Activated CD4-positive, alpha-beta T cell treated with anti-CD3 and anti-CD28 coated beads, Interleukin-2, amount 10 ng/mL, durations not matched to agents 7 days and 5 days (primary cell): ENCODE measurements at regions of chr3 and their contacts with region 1.

Region 1: DNA sequence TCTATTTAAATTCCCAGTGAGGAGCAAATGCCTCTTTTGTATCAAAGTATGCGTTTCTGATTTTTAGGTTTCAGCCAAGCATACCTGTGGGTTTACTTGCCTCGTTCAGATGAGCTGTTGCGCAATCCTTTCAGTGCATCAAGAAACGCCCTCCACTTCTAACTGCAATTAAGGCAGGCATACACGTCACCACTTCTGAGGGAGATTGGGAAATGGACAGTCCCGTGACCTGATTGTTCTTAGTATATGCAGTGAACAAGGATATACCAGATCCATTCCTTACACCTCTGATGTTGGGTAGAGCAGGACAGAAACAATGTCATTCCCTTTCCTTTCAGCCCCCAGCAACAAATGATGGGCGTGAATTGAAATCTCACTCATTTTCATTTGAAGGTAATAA is 219.0 kb downstream of the ITPR1 start:
- DNase-seq: no peak
- H3K4me3 Mint-ChIP-seq: no peak overlapping the region
- H3K27ac Mint-ChIP-seq: no peak overlapping the region
- H3K4me1 Mint-ChIP-seq: peaks cover 18% of the 10 kb centered on the region
- H3K27me3 Mint-ChIP-seq: no peaks in the 10 kb centered on the region

Region 2: GRCh38 chr3:4670352-4670751 is 41.8 kb before region 1 on chr3:
- CTCF ChIA-PET with region 1: no interaction called
- POLR2A ChIA-PET with region 1: no interaction called
- DNase-seq: no peak
- H3K4me3 Mint-ChIP-seq: no peak overlapping the region
- H3K27ac Mint-ChIP-seq: no peak overlapping the region
- H3K4me1 Mint-ChIP-seq: no peaks in the 10 kb centered on the region
- H3K27me3 Mint-ChIP-seq: no peaks in the 10 kb centered on the region

Region 3: GRCh38 chr3:4786431-4786830 is 74.3 kb after region 1 on chr3:
- CTCF ChIA-PET with region 1: no interaction called
- POLR2A ChIA-PET with region 1: no interaction called
- DNase-seq: no peak
- H3K4me3 Mint-ChIP-seq: no peak overlapping the region
- H3K27ac Mint-ChIP-seq: no peak overlapping the region
- H3K4me1 Mint-ChIP-seq: no peaks in the 10 kb centered on the region
- H3K27me3 Mint-ChIP-seq: no peaks in the 10 kb centered on the region

Region 4: DNA sequence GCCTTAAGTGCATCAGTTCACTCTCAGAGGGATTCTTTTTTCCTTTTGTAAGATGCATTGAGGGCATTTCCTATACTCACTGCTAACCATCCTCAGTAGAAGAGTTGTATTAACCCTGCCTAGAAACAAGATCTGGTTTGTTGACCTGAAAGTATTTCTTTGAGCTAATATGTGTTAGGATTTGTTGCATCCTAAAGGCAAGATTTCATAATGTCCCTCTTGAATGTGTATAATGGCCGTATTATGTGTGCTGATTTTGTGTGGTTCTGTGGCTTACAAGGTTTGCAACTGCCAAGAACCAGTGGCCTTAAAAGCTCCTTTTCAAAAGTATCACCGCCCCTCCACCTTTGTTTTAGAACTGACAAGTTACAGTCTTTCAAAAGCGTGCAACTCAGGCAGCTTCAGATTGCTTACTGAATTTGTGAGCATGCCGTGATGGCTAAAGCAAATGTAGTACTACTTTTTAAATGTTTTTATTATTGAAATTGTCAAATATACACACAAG is 85.1 kb after region 1 on chr3:
- CTCF ChIA-PET with region 1: no interaction called
- POLR2A ChIA-PET with region 1: no interaction called
- DNase-seq: no peak
- H3K4me3 Mint-ChIP-seq: no peak overlapping the region
- H3K27ac Mint-ChIP-seq: no peak overlapping the region
- H3K4me1 Mint-ChIP-seq: peaks cover 1% of the 10 kb centered on the region
- H3K27me3 Mint-ChIP-seq: no peaks in the 10 kb centered on the region

Region 5: GRCh38 chr3:4826237-4827100 is 114.3 kb after region 1 on chr3:
- CTCF ChIA-PET with region 1: interaction called, 10 read pairs
- POLR2A ChIA-PET with region 1: no interaction called
- DNase-seq: no peak
- H3K4me3 Mint-ChIP-seq: peak overlapping the region; percentile 74
- H3K27ac Mint-ChIP-seq: peak overlapping the region; percentile 88
- H3K4me1 Mint-ChIP-seq: peaks cover 97% of the 10 kb centered on the region
- H3K27me3 Mint-ChIP-seq: no peaks in the 10 kb centered on the region

Region 6: GRCh38 chr3:4986782-4987537 is 274.8 kb after region 1 on chr3:
- CTCF ChIA-PET with region 1: interaction called, 22 read pairs
- POLR2A ChIA-PET with region 1: no interaction called
- DNase-seq: peak; percentile 80
- H3K4me3 Mint-ChIP-seq: peak overlapping the region; percentile 78
- H3K27ac Mint-ChIP-seq: peak overlapping the region; percentile 87
- H3K4me1 Mint-ChIP-seq: peaks cover 67% of the 10 kb centered on the region
- H3K27me3 Mint-ChIP-seq: no peaks in the 10 kb centered on the region

Region 7: GRCh38 chr3:5026331-5027218 is 314.4 kb after region 1 on chr3:
- CTCF ChIA-PET with region 1: interaction called, 11 read pairs
- POLR2A ChIA-PET with region 1: no interaction called
- DNase-seq: peak; percentile 63
- H3K4me3 Mint-ChIP-seq: peak overlapping the region; percentile 74
- H3K27ac Mint-ChIP-seq: peak overlapping the region; percentile 85
- H3K4me1 Mint-ChIP-seq: peaks cover 42% of the 10 kb centered on the region
- H3K27me3 Mint-ChIP-seq: peaks cover 2% of the 10 kb centered on the region

Region 8: GRCh38 chr3:5041315-5041714 is 329.2 kb after region 1 on chr3:
- CTCF ChIA-PET with region 1: interaction called, 10 read pairs
- POLR2A ChIA-PET with region 1: no interaction called
- DNase-seq: no peak
- H3K4me3 Mint-ChIP-seq: no peak overlapping the region
- H3K27ac Mint-ChIP-seq: no peak overlapping the region
- H3K4me1 Mint-ChIP-seq: peaks cover 17% of the 10 kb centered on the region
- H3K27me3 Mint-ChIP-seq: no peaks in the 10 kb centered on the region

Region 9: GRCh38 chr3:5057857-5058324 is 345.7 kb after region 1 on chr3:
- CTCF ChIA-PET with region 1: interaction called, 35 read pairs
- POLR2A ChIA-PET with region 1: no interaction called
- DNase-seq: peak; percentile 84
- H3K4me3 Mint-ChIP-seq: no peak overlapping the region
- H3K27ac Mint-ChIP-seq: no peak overlapping the region
- H3K4me1 Mint-ChIP-seq: peaks cover 26% of the 10 kb centered on the region
- H3K27me3 Mint-ChIP-seq: peaks cover 7% of the 10 kb centered on the region

Region 10: GRCh38 chr3:5063724-5064123 is 351.6 kb after region 1 on chr3:
- CTCF ChIA-PET with region 1: interaction called, 10 read pairs
- POLR2A ChIA-PET with region 1: no interaction called
- DNase-seq: no peak
- H3K4me3 Mint-ChIP-seq: no peak overlapping the region
- H3K27ac Mint-ChIP-seq: no peak overlapping the region
- H3K4me1 Mint-ChIP-seq: no peaks in the 10 kb centered on the region
- H3K27me3 Mint-ChIP-seq: peaks cover 7% of the 10 kb centered on the region